Activated CD8-positive, alpha-beta T cell treated with anti-CD3 and anti-CD28 coated beads for 36 hours (primary cell): ENCODE measurements at regions of chr4 and their contacts with region 1.

Region 1: DNA sequence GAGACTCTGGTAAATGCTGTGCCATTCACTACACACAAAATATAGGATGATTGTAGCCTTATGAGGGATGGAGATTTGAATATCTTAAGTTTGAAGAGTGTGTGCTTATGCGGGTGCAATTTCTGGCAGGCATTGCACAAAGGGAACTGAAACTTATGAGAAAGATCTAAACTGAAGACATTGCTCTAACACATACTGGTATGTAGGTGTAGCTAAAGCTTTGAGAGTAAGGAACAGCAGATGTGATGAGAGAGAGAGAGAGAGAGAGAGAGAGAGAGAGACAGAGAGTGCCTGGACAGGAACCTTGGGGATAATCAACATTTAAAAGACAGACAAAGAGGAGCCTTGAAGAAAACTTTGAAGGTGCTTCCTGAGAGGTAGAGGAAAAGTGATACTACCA is 379.7 kb downstream of the SPRY1 start:
- DNase-seq: no peak
- ATAC-seq: peak; percentile 39
- H3K4me3 Mint-ChIP-seq: no peak overlapping the region
- H3K27ac Mint-ChIP-seq: no peak overlapping the region
- H3K4me1 Mint-ChIP-seq: peaks cover 3% of the 10 kb centered on the region
- H3K27me3 Mint-ChIP-seq: peaks cover 10% of the 10 kb centered on the region
- CTCF ChIP-seq: no peak

Region 2: GRCh38 chr4:123672987-123673386 is 103.3 kb before region 1 on chr4:
- CTCF ChIA-PET with region 1: no interaction called
- POLR2A ChIA-PET with region 1: no interaction called
- intact Hi-C with region 1: no loop called
- DNase-seq: no peak
- ATAC-seq: peak; percentile 31
- H3K4me3 Mint-ChIP-seq: no peak overlapping the region
- H3K27ac Mint-ChIP-seq: no peak overlapping the region
- H3K4me1 Mint-ChIP-seq: peaks cover 14% of the 10 kb centered on the region
- H3K27me3 Mint-ChIP-seq: peaks cover 34% of the 10 kb centered on the region
- CTCF ChIP-seq: no peak

Region 3: GRCh38 chr4:123750044-123750443 is 26.2 kb before region 1 on chr4:
- CTCF ChIA-PET with region 1: interaction called, 10 read pairs
- POLR2A ChIA-PET with region 1: no interaction called
- intact Hi-C with region 1: no loop called
- DNase-seq: no peak
- ATAC-seq: no peak
- H3K4me3 Mint-ChIP-seq: no peak overlapping the region
- H3K27ac Mint-ChIP-seq: no peak overlapping the region
- H3K4me1 Mint-ChIP-seq: no peaks in the 10 kb centered on the region
- H3K27me3 Mint-ChIP-seq: peaks cover 7% of the 10 kb centered on the region
- CTCF ChIP-seq: no peak

Region 4: DNA sequence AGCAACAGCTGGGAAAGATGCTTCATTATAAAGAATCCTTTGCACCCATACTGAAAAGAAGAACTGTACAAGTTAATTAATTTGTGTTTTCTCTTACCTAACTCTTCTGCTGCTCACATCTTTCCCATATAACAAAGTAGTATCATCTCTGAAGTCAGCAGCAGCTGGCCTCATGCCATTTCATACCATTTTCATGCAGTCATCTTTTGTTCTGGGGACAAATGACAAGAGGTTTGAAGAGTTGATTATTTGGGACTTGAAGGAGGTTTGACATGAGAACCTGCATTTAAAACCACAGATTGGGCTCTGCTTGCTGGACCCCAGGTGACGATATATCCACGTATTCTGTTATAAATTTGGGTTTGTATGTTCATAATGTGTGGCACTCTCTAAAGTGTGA is 50.6 kb after region 1 on chr4:
- CTCF ChIA-PET with region 1: no interaction called
- POLR2A ChIA-PET with region 1: no interaction called
- intact Hi-C with region 1: no loop called
- DNase-seq: no peak
- ATAC-seq: no peak
- H3K4me3 Mint-ChIP-seq: no peak overlapping the region
- H3K27ac Mint-ChIP-seq: no peak overlapping the region
- H3K4me1 Mint-ChIP-seq: no peaks in the 10 kb centered on the region
- H3K27me3 Mint-ChIP-seq: peaks cover 5% of the 10 kb centered on the region
- CTCF ChIP-seq: no peak

Region 5: DNA sequence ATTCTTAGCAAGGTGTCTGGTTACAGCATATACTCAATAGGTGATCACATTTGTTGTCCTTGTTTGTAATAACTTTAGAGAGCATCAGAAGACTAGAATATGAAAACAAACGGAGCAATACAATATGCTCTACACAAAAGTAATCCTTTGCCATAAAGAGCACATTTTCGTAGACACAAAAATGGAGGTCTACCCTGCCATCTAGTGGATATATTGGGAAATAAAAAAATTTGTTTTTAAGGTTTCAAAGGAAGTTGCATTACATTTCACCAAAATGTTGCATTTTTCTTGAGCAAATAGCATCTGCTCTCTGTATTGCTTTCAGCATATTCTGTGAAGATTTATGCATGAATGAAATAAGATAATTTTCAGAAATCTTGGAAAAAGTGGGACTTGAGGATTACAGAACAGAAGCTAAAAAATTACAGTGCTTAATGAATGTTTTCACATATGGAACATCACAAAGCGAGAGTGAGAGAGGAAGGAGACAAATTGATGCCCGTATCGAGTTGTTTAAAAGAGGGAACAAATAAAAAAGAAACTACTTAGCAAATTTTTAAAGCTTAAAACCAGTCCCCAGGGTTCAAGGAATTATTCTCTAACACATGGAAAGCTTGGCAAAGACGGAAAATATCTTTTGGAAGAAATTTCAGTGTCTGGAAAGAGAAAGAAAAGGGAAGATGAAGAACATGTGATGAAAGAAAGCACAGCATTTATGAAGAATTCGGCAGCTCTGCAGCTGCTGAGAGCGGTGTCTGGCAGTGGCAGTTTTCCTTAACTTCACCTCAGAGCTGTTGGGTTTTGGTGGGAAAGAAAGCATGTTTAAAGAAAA is 546.2 kb after region 1 on chr4:
- CTCF ChIA-PET with region 1: interaction called, 15 read pairs
- POLR2A ChIA-PET with region 1: no interaction called
- intact Hi-C with region 1: loop called (anchors 10 kb)
- DNase-seq: no peak
- ATAC-seq: no peak
- H3K4me3 Mint-ChIP-seq: no peak overlapping the region
- H3K27ac Mint-ChIP-seq: no peak overlapping the region
- H3K4me1 Mint-ChIP-seq: no peaks in the 10 kb centered on the region
- H3K27me3 Mint-ChIP-seq: peaks cover 1% of the 10 kb centered on the region
- CTCF ChIP-seq: peak; percentile 66